ENCODE measurements at regions of chr14 and their contacts with region 1.

Region 1: GRCh38 chr14:78697341-78697740 is 527.2 kb downstream of the NRXN3 start:
- DNase-seq: peak; percentile 33
- H3K4me3 Mint-ChIP-seq: no peak overlapping the region
- H3K27ac Mint-ChIP-seq: no peak overlapping the region
- H3K4me1 Mint-ChIP-seq: no peaks in the 10 kb centered on the region
- H3K27me3 Mint-ChIP-seq: peaks cover 69% of the 10 kb centered on the region
- CTCF ChIP-seq: peak; percentile 69

Region 2: DNA sequence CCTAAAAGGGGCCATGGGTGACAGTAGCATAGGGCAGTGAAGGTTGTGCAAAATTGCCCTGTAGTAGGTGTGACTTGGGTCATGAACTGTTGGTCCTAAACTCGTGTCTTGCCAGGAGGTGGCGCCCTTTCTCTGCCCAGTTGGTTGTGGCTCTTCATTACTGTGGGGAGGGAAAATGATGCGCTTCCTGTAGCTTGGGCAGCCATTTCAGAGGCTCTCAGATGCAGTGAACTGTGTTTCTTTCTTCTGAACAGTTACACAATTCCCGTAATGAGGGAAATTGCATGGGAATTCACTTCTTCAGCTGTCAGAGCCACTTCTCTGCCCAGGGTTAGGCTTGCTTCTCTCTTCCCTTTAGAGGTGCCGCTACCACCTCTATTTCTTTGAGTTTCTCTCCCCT is 675.3 kb before region 1 on chr14:
- CTCF ChIA-PET with region 1: no interaction called
- POLR2A ChIA-PET with region 1: no interaction called
- intact Hi-C with region 1: loop called (anchors 2 kb)
- DNase-seq: peak; percentile 80
- H3K4me3 Mint-ChIP-seq: no peak overlapping the region
- H3K27ac Mint-ChIP-seq: no peak overlapping the region
- H3K4me1 Mint-ChIP-seq: no peaks in the 10 kb centered on the region
- H3K27me3 Mint-ChIP-seq: peaks cover 9% of the 10 kb centered on the region
- CTCF ChIP-seq: peak; percentile 73

Region 3: DNA sequence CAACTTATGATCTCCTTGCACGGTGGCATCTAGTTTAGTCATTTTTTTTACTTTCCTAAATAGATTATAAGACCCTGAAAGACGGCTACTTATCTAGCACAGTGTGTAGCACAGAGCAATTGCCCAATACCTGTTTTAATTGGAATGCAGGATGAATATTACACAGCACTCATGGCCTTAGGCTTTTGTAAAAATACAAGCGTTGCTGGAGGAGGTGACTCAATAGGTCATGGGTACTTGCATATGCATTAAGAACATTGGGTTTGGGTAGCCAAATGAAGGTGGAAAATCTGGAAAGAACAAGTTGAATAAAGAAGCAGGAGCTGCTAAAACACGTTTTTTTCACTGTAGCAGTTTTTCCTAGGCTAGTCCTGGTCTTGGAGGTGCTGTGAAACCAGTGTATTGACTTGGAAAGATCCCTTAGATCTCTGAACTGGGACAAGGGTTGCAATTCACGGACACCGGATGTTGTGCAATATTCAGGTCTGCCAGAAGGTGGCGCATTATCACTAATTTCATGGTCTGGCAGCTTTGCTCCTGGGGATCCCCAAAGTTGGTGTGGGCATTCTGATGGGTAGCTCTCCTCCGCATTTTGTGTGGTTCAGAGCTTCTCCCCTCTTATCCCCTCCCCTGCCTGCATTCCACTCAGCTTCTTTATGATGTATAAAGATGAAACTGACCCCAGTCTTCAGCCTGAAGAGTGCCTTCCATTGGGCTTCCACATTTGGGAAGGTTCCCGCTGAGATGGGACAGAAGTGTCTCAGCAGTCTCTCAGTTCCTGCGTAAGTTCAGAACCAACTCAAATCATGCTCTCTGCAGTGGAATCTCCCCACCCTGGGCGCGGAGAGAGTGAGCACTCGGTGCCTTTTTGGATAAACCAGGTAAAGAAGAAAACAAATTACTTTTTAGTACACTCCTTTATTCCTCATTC is 248.9 kb before region 1 on chr14:
- CTCF ChIA-PET with region 1: interaction called, 3 read pairs
- POLR2A ChIA-PET with region 1: no interaction called
- intact Hi-C with region 1: loop called (anchors 1 kb)
- DNase-seq: peak; percentile 49
- H3K4me3 Mint-ChIP-seq: no peak overlapping the region
- H3K27ac Mint-ChIP-seq: no peak overlapping the region
- H3K4me1 Mint-ChIP-seq: no peaks in the 10 kb centered on the region
- H3K27me3 Mint-ChIP-seq: no peaks in the 10 kb centered on the region
- CTCF ChIP-seq: peak; percentile 64

Region 4: DNA sequence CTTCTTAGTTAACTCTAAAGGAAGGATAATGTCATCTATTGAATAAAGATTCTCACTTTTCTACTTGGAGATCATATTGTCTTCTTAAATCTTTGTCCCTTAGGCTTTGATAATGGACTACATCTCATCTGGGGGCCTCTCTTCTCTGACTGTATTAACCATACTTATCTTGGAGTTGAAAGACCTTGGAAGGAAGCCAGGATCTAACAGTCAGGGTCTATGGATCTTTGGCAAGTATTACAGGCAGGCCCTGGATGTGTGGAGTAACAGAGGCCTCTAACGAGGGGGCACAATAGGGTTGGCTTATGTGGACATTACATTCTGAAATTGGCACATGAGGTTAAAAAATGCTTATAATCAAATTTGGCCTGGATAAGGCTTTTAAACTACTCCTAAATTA is 13.4 kb before region 1 on chr14:
- CTCF ChIA-PET with region 1: interaction called, 12 read pairs
- POLR2A ChIA-PET with region 1: no interaction called
- intact Hi-C with region 1: no loop called
- DNase-seq: no peak
- H3K4me3 Mint-ChIP-seq: no peak overlapping the region
- H3K27ac Mint-ChIP-seq: no peak overlapping the region
- H3K4me1 Mint-ChIP-seq: peaks cover 5% of the 10 kb centered on the region
- H3K27me3 Mint-ChIP-seq: peaks cover 11% of the 10 kb centered on the region
- CTCF ChIP-seq: no peak

Region 5: GRCh38 chr14:78747809-78748421 is 50.6 kb after region 1 on chr14:
- CTCF ChIA-PET with region 1: no interaction called
- POLR2A ChIA-PET with region 1: no interaction called
- intact Hi-C with region 1: no loop called
- DNase-seq: no peak
- H3K4me3 Mint-ChIP-seq: peak overlapping the region; percentile 36
- H3K27ac Mint-ChIP-seq: no peak overlapping the region
- H3K4me1 Mint-ChIP-seq: peaks cover 14% of the 10 kb centered on the region
- H3K27me3 Mint-ChIP-seq: peaks cover 10% of the 10 kb centered on the region
- CTCF ChIP-seq: no peak

Measured in MCF 10A (cell line).